ENCODE measurements at regions of chr13 and their contacts with region 1.

Region 1: GRCh38 chr13:78658635-78659449 is at the start of gene OBI1:
- DNase-seq: peak; percentile 92 to 95 (median 93)
- ATAC-seq: peak; percentile 97 to 99 (median 98)
- H3K4me3 ChIP-seq: peak within 1 kb of the TSS; percentile 56 to 95 (median 85)
- H3K27ac ChIP-seq: peak within 1 kb of the TSS in 11 of 12 donors; percentile 55 to 86 (median 78)
- H3K4me1 ChIP-seq: peaks cover 0 to 33% (median 25%) of the 10 kb centered on the region in 12 donors
- H3K27me3 ChIP-seq: peaks cover 0 to 5% (median 0%) of the 10 kb centered on the region in 9 donors
- CTCF ChIP-seq: no peak
- POLR2A ChIP-seq: peak in 1 of 2 donors; percentile 39
- total RNA-seq, gene OBI1: 7.7 to 12.3 (median 10.0) TPM

Region 2: DNA sequence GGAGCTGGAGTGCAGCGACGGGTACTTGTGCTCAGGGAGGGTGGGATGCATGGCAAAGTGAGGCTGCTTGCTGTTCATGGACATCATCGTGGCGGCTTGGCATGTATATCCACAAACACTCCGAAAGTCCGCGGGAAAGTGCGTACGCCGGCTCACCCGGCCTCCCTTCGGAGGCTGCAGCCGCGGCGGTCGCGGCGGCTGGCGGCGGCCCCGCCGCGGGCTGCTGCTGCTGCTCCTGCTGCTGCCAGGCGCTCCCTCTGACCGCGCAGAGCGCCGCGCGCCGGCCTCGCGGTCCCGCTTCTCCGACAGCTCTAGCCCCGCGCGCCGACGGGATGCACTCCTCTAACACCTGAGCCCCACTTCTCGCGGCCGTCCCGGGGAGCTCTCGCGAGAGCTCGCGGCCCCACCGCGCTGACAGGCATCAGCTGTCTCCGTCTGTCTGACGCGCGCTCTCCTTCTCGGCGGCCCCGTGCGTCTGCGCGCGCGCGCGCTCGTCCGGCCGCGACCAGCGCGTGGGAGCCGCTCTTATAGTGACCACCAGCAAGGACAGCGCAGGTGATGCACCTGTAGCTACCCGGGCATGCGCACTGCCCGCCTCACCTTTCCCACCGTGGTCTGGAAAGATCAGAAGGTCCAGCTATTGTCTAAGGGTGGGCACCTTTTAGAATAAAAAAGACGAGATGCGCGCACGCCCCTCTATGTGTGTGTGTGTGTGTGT is 55.4 kb before region 1 on chr13 and contains the start of gene POU4F1:
- intact Hi-C with region 1: loop called in 7 of 10 experiments (anchors 5 to 10 kb)
- DNase-seq: no peak
- ATAC-seq: peak in 2 of 4 donors; percentile 39 to 41
- H3K4me3 ChIP-seq: peak within 1 kb of the TSS; percentile 14 to 51 (median 38)
- H3K27ac ChIP-seq: no peak within 1 kb of the TSS
- H3K4me1 ChIP-seq: peaks cover 4 to 48% (median 25%) of the 10 kb centered on the region in 12 donors
- H3K27me3 ChIP-seq: peaks cover 82 to 96% (median 94%) of the 10 kb centered on the region in 9 donors
- CTCF ChIP-seq: no peak
- POLR2A ChIP-seq: no peak
- total RNA-seq, gene POU4F1: 0.04 TPM in 1 of 9 donors, not detected in the others

Region 3: GRCh38 chr13:78609464-78610205 is 49.2 kb before region 1 on chr13:
- intact Hi-C with region 1: loop called in 7 of 10 experiments (anchors 5 to 10 kb)
- DNase-seq: no peak
- ATAC-seq: peak in 3 of 4 donors; percentile 56 to 60 (median 56)
- H3K4me3 ChIP-seq: peak overlapping the region; percentile 26 to 61 (median 53)
- H3K27ac ChIP-seq: no peak overlapping the region
- H3K4me1 ChIP-seq: peaks cover 0 to 36% (median 20%) of the 10 kb centered on the region in 12 donors
- H3K27me3 ChIP-seq: peaks cover 49 to 79% (median 58%) of the 10 kb centered on the region in 9 donors
- CTCF ChIP-seq: no peak
- POLR2A ChIP-seq: no peak

Region 4: GRCh38 chr13:78875792-78876580 is 217.1 kb after region 1 on chr13:
- intact Hi-C with region 1: no loop called
- DNase-seq: peak in 1 of 5 donors; percentile 61
- ATAC-seq: no peak
- H3K4me3 ChIP-seq: no peak overlapping the region
- H3K27ac ChIP-seq: no peak overlapping the region
- H3K4me1 ChIP-seq: no peaks in the 10 kb centered on the region
- H3K27me3 ChIP-seq: no peaks in the 10 kb centered on the region
- CTCF ChIP-seq: no peak
- POLR2A ChIP-seq: no peak